Prostate gland (tissue), 2 donors: ENCODE measurements at regions of chr20 and their contacts with region 1.

Region 1: DNA sequence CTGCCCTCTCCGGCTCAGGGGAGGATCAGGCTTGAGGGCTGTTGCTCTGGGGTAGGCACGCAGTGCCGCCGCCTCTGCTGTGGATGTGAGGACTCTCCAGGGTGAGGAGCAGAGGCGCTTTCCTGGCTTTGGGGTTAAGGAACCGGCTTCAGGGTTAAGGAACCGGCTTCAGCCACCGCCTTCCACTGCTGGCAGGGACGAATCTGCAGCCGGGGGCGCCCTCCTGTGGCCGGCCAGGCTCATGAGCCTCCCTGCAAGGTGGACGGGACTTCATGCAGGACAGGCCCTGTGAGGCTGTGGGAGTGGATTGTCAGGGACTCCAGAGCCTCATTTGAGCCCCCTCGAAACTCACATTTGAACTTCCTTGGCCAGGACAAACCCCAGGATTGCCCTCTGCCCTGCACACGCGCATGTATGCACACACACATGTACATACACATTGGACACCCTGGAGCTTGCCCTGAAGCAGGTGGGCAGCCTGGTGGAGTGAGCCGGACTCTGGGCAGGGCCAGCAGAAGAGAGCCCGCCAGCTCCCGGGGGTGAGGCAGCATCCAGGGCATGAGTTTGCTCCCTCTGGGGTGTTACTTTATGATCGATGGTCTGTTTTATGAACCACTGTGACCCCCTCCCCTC is 146.8 kb downstream of the PHACTR3 start:
- DNase-seq: peak; percentile 24
- H3K4me3 ChIP-seq: no peak overlapping the region
- H3K27ac ChIP-seq: no peak overlapping the region
- H3K4me1 ChIP-seq: no peaks in the 10 kb centered on the region
- H3K27me3 ChIP-seq: peaks cover 9% of the 10 kb centered on the region
- CTCF ChIP-seq: peak in 3 of 4 experiments; percentile 53 to 56 (median 54)
- POLR2A ChIP-seq: no peak

Region 2: GRCh38 chr20:59571551-59572314 is 179.4 kb before region 1 on chr20:
- intact Hi-C with region 1: loop called (anchors 5 kb)
- DNase-seq: peak; percentile 29
- H3K4me3 ChIP-seq: peak overlapping the region; percentile 10 to 18
- H3K27ac ChIP-seq: no peak overlapping the region
- H3K4me1 ChIP-seq: no peaks in the 10 kb centered on the region
- H3K27me3 ChIP-seq: peaks cover 6% of the 10 kb centered on the region
- CTCF ChIP-seq: peak; percentile 59 to 73 (median 68)
- POLR2A ChIP-seq: no peak

Region 3: GRCh38 chr20:59598625-59599310 is 152.4 kb before region 1 on chr20:
- intact Hi-C with region 1: loop called (anchors 2 kb)
- DNase-seq: no peak
- H3K4me3 ChIP-seq: no peak overlapping the region
- H3K27ac ChIP-seq: no peak overlapping the region
- H3K4me1 ChIP-seq: no peaks in the 10 kb centered on the region
- H3K27me3 ChIP-seq: peaks cover 8% of the 10 kb centered on the region
- CTCF ChIP-seq: peak; percentile 38 to 66 (median 49)
- POLR2A ChIP-seq: no peak

Region 4: DNA sequence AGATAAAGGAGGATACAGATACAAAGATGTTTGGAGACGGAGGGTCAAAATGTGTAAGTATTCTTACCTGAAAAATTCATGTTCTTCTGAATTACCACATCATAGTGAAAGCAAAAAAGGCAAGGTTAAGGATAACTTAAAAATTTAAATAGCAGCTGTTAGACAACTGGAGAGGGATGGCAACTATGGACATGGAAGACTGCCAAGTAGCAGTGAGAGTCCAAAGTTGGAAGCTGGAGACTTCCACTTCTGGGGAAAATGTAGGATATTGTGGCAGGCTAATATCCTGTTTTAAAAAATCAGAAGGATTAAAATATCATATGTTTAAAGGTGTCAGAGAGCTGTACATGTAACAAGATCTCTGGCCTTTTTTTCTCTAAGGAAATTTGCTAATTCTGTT is 152.4 kb after region 1 on chr20:
- intact Hi-C with region 1: no loop called
- DNase-seq: no peak
- H3K4me3 ChIP-seq: no peak overlapping the region
- H3K27ac ChIP-seq: no peak overlapping the region
- H3K4me1 ChIP-seq: no peaks in the 10 kb centered on the region
- H3K27me3 ChIP-seq: no peaks in the 10 kb centered on the region
- CTCF ChIP-seq: no peak
- POLR2A ChIP-seq: no peak